ENCODE measurements at regions of chr4 and their contacts with region 1.

Region 1: DNA sequence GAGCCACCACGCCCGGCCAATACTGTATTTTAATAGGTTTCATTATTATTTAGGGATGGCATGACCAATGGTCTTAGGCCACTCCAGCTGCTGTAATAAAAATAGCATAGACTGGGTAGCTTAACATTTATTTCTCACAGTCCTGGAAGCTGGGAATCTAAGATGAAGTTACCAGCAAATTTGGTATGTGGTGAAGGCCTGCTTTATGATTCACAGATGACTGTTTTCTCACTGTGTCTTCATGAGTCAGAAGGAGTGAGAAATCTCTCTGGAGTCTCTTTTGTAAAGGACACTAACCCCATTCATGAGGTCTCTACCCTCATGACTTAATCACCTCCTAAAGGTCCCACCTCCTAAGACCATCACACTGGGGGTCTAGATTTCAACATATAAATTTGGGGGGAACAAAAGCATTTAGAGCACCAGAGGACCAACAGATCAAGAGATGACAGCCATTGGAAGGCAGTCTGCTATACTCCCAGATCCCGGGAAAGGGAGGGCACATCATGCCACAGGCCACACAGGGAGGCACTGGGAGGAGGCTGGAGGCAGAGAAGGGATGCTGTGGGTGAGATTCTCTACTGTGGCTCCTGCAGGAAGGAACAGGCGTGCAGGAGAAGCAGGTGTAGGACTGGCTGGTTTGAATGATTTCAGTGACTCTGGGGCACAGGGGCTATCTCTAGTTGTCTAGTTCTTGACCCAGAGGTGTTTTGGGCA is 335.8 kb upstream of the SFRP2 start:
- DNase-seq: no peak
- H3K4me3 ChIP-seq: no peak overlapping the region
- H3K27ac ChIP-seq: no peak overlapping the region
- H3K4me1 ChIP-seq: no peaks in the 10 kb centered on the region
- H3K27me3 ChIP-seq: no peaks in the 10 kb centered on the region
- CTCF ChIP-seq: no peak
- EP300 ChIP-seq: no peak
- POLR2A ChIP-seq: no peak

Region 2: GRCh38 chr4:154088741-154089140 is 36.0 kb before region 1 on chr4:
- intact Hi-C with region 1: loop called in 1 of 4 experiments (anchors 1 kb)
- DNase-seq: no peak
- H3K4me3 ChIP-seq: no peak overlapping the region
- H3K27ac ChIP-seq: no peak overlapping the region
- H3K4me1 ChIP-seq: no peaks in the 10 kb centered on the region
- H3K27me3 ChIP-seq: no peaks in the 10 kb centered on the region
- CTCF ChIP-seq: no peak
- EP300 ChIP-seq: no peak
- POLR2A ChIP-seq: no peak